ENCODE measurements at regions of chr4 and their contacts with region 1.

Region 1: DNA sequence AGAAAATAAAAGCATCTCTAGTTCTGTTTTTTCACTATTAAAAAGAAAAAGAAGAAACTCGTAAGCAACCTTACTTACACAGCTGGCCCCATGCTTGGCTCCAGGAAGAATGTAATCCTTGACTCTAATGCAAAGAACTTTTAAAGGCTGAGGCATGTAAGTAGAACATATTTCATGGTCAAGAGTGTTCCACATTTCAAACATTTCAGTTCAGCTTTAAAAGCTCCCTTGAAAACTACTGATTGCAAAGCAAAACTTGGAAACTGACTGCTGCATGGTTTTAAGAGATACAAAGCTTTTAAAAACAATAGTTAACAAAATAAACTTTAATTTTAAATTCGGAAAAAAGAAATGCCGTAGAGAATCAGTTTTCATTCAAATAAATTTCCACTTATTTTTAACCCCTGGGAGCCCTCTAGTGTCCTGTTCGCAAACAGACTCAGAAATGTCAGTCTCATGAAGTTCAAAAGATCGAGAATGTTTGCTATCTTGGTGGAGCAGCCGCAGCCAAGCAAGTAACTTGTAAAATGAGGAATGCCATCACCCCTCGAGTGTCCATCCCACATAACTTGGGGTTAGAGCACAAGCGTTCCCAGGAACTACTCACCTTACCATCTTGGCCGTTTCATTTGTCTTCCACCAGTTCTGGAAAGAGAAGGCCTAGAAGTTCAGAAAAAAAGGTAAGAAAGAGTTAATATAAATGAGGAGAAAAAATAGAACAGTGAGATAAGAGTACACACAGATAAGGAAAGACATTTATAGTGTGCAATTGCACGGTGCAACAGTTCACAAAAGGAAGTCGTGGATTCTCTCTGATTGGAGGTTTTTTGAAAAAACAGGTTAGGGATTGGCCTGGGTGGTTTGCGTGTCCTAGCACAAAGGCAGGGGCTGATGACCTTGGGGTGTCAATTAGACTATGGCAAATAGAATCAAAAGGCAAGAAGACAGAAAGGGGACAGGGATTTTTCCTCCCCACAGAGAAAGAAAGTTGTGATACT is at the start of gene GASK1B:
- DNase-seq: no peak
- ATAC-seq: peak; percentile 67
- total RNA-seq, gene GASK1B: 68.6 TPM

Region 2: GRCh38 chr4:157700898-157701694 is 471.5 kb before region 1 on chr4:
- intact Hi-C with region 1: loop called (anchors 5 kb)
- DNase-seq: no peak
- ATAC-seq: no peak

Region 3: DNA sequence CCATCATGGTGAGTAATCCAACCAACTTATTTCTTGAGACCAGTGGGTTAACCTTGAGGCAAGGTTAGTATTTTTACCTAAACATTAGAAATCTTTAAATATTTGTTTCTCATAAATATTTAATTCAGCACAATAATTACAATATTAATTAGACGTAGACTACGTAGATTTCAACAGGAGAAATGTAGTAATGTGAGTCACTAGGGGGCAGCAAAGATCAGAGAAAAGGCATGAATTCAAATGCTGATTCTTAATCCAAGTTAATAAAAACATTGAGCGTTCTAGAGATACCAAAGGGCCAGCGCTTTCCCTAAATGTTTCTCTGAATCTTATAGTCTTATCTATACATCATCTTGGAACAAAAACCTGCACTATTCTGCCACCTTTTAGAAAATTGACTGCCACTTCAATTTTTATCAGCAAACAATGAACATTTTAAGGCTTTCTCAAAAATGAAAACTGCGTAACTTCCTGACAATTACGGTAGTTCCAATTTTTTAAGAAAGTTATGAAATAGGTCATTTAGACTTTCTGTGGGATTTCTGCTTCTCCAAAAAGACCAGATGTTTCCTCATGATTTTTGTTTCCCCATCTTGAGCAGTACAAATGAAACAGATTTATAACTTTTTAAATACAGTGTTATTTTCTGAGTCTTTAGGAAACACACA is 180.4 kb before region 1 on chr4:
- intact Hi-C with region 1: loop called (anchors 1 kb)
- DNase-seq: no peak
- ATAC-seq: peak; percentile 80

Region 4: GRCh38 chr4:158006990-158007389 is 165.6 kb before region 1 on chr4:
- intact Hi-C with region 1: loop called (anchors 2 kb)
- DNase-seq: no peak
- ATAC-seq: peak; percentile 56

Region 5: DNA sequence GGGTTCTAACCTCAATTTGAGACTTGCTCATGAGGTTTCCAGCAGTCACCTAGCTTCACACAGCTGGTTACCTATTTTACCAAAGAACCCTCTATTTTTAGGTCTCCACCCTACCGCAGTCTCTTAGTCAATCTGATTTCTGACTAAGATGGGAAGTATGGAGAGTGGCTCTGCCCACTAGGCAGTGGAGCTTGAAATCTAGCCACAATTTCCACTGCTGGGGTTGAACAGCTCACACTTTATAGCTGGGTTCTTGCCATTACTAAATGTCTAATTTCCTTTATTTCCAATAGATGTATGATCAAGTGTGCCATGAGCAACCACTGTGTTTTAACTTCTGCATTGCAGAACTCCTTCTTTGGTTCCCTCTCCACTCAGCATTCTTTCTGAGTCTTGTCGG is 42.9 kb before region 1 on chr4:
- intact Hi-C with region 1: loop called (anchors 5 kb)
- DNase-seq: no peak
- ATAC-seq: no peak

Measured in Right ventricle myocardium inferior (tissue), 1 donor.